PC-9 (cell line): ENCODE measurements at regions of chr1 and their contacts with region 1.

Region 1: GRCh38 chr1:205121660-205122488 is at the start of gene RBBP5:
- DNase-seq: peak; percentile 94 to 95
- H3K4me3 ChIP-seq: peak within 1 kb of the TSS; percentile 84
- H3K27ac ChIP-seq: peak within 1 kb of the TSS; percentile 79
- H3K4me1 ChIP-seq: peaks cover 13% of the 10 kb centered on the region
- H3K27me3 ChIP-seq: no peaks in the 10 kb centered on the region
- CTCF ChIP-seq: peak; percentile 63
- total RNA-seq, gene RBBP5: 17.7 and 17.9 TPM in 2 replicates

Region 2: GRCh38 chr1:204516180-204516879 is 605.5 kb before region 1 on chr1 and contains the start of gene MDM4:
- CTCF ChIA-PET with region 1: interaction called, 3 read pairs
- POLR2A ChIA-PET with region 1: no interaction called
- intact Hi-C with region 1: loop called (anchors 1 kb)
- DNase-seq: peak; percentile 90 to 93
- H3K4me3 ChIP-seq: peak within 1 kb of the TSS; percentile 70
- H3K27ac ChIP-seq: peak within 1 kb of the TSS; percentile 94
- H3K4me1 ChIP-seq: peaks cover 11% of the 10 kb centered on the region
- H3K27me3 ChIP-seq: no peaks in the 10 kb centered on the region
- CTCF ChIP-seq: no peak
- total RNA-seq, gene MDM4: 69.2 and 82.6 TPM in 2 replicates

Region 3: GRCh38 chr1:204544321-204544720 is 577.6 kb before region 1 on chr1:
- CTCF ChIA-PET with region 1: no interaction called
- POLR2A ChIA-PET with region 1: no interaction called
- intact Hi-C with region 1: no loop called
- DNase-seq: no peak
- H3K4me3 ChIP-seq: no peak overlapping the region
- H3K27ac ChIP-seq: no peak overlapping the region
- H3K4me1 ChIP-seq: no peaks in the 10 kb centered on the region
- H3K27me3 ChIP-seq: no peaks in the 10 kb centered on the region
- CTCF ChIP-seq: no peak

Region 4: DNA sequence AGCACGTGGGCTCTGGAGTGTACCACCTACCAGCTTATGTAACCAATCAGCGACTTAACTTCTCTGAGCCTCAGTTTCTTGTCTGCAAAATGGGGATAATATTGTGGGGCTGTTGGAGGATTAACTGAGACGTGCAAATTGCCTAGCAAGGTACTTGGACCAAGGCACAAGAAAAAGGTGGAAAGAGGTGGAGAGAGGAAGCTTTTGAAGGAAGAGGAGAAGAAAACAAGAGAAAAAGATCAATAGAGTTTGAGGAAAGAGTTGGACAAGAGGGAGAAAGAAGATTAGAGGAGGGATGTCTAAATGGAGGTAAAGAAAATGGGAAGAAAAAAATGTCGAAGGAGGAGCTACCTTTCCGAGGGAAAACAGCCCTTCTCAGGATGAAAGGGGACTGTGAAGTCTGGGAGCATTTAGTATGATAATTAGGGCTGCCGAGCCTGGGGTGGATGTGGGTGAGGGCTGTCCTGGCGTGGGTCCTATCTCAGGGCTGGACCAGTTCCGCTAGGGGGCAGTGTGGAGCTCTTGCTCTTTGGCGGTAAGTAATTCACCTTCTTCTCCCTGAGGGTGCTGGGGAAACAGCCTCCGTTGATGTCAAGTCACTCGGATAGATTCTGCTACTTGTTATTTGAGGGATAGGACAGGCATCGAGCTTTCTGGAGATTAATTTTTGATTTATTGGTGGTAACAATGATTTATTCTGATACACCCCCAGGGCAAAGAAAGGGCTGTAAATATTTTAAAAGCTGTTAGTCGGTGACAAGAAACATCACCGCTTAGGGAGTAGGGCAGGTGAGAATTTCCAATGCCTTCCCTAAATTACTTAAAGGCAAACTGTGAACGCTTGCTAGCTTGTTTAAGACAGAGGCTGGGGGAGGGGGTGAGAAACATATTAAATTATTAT is 330.2 kb before region 1 on chr1:
- CTCF ChIA-PET with region 1: no interaction called
- POLR2A ChIA-PET with region 1: no interaction called
- intact Hi-C with region 1: no loop called
- DNase-seq: peak in 1 of 2 experiments; percentile 59
- H3K4me3 ChIP-seq: no peak overlapping the region
- H3K27ac ChIP-seq: no peak overlapping the region
- H3K4me1 ChIP-seq: no peaks in the 10 kb centered on the region
- H3K27me3 ChIP-seq: 0 out of 2 replicates have a peak, but pooled peaks cover 27% of the 10 kb centered on the region
- CTCF ChIP-seq: peak; percentile 85

Region 5: GRCh38 chr1:205141236-205142101 is 19.6 kb after region 1 on chr1:
- CTCF ChIA-PET with region 1: no interaction called
- POLR2A ChIA-PET with region 1: no interaction called
- intact Hi-C with region 1: loop called (anchors 2 kb)
- DNase-seq: peak; percentile 59
- H3K4me3 ChIP-seq: no peak overlapping the region
- H3K27ac ChIP-seq: no peak overlapping the region
- H3K4me1 ChIP-seq: peaks cover 11% of the 10 kb centered on the region
- H3K27me3 ChIP-seq: no peaks in the 10 kb centered on the region
- CTCF ChIP-seq: peak; percentile 87

Region 6: DNA sequence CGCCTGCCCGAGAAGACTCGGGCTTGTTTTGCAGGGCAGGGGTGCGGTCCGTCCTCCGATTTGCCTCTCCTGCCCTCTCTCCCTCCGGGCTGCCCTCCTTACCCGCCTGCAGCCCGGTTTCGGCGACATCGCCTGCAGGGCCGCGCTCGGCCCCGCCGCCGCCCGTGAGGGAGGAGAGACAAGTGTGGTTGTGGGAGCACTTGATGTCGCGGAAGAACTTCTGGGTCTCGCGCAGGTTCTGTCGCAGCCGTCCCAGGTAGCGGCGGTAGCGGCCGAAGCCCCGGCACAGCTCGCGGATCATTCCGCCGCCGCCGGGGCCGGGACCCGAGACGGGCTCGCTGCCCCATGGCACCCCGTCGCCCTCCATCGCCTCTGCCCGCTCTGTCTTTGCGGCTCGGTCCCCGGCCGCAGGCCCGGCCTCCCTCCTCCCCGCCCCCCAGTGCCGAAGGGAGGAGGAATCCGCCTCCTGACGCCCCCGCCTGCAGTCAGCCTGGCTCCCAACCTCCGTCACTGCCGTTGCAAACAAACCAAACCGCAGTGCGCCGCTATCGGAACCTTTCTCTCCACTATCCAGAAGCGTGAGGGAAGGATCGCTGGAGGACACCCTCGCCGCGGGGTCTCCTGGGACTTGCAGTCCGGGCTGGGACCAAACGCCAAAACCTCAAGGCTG is 89.4 kb after region 1 on chr1 and contains the start of gene DSTYK:
- CTCF ChIA-PET with region 1: no interaction called
- POLR2A ChIA-PET with region 1: no interaction called
- intact Hi-C with region 1: loop called (anchors 1 kb)
- DNase-seq: peak; percentile 84 to 92
- H3K4me3 ChIP-seq: peak within 1 kb of the TSS; percentile 85
- H3K27ac ChIP-seq: peak within 1 kb of the TSS; percentile 46; the same call in 1 of the 2 replicates
- H3K4me1 ChIP-seq: peaks cover 10% of the 10 kb centered on the region
- H3K27me3 ChIP-seq: no peaks in the 10 kb centered on the region
- CTCF ChIP-seq: no peak
- total RNA-seq, gene DSTYK: 8.1 and 10.5 TPM in 2 replicates

Region 7: DNA sequence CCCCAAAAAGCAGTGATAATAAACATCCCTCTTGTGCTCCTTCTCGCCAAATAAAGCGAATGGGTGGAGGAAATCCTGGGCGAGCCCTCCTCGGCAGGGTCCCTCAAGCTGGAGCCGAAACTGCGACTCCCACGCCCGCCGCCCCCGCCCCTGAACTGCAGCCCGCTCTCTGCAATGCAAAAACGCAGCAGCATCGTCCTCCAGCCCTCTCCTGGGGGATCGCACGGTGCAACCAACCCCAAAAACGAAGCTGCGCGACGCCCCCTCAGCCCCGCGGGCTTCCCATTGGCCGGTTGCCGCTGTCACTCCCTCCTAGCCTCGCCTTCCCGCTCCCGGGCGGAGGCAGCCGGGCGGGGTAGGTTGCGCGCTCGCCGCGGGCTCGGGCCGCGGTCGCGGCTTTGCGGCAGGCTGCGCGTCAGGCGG is 105.7 kb after region 1 on chr1 and contains the start of gene TMCC2:
- CTCF ChIA-PET with region 1: no interaction called
- POLR2A ChIA-PET with region 1: no interaction called
- intact Hi-C with region 1: loop called (anchors 1 kb)
- DNase-seq: peak; percentile 52 to 82
- H3K4me3 ChIP-seq: peak within 1 kb of the TSS; percentile 58
- H3K27ac ChIP-seq: no peak within 1 kb of the TSS
- H3K4me1 ChIP-seq: 0 out of 2 replicates have a peak, but pooled peaks cover 8% of the 10 kb centered on the region
- H3K27me3 ChIP-seq: peaks cover 12% of the 10 kb centered on the region; the same call in 1 of the 2 replicates
- CTCF ChIP-seq: no peak
- total RNA-seq, gene TMCC2: 0.79 and 0.80 TPM in 2 replicates